ENCODE measurements at regions of chr6 and their contacts with region 1.

Region 1: DNA sequence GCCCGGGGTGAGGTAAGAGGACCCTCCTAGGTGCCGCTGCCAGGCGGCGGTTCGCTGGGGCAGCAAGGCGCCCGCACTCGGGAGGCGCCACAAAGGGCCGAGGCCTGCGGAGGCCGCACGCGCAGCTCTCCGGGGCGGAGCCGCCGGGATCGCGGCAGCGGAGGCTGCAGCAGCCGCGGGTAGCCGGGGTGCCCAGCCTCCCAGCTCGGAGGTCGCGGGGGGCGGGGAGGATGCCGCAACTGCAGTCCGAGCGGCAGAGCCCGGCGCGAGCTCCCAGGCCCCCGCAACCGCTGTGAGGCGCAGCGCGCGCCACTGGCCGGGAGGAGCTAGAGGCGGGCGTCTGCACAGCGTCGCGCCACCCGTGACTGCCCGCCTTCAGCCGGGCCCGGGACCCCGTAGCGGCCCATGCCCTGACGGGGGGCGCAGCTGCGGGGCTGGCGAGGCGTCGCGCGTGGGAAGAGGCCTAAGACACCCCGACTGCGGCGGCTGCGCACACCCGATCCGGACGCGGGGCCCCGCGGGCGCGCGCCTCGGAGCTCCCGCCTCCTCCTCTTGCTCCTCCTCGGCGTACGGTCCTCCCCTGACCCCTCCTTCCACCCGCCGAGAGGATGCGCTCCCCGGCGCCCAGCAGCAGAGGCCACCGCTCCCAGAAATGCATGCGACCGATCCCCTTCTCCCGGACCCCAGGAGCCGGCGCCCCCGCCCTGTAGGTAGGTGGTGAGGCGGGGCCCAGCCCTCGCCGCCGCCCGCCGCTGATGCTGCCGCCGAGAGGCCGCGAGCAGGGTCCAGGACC is at the start of gene NCOA7:
- DNase-seq: peak; percentile 93
- H3K4me3 ChIP-seq: peak within 1 kb of the TSS; percentile 67 to 92
- H3K27ac ChIP-seq: peak within 1 kb of the TSS; percentile 86 to 97
- H3K4me1 ChIP-seq: peaks cover 37 to 44% of the 10 kb centered on the region in 2 experiments
- H3K27me3 ChIP-seq: no peaks in the 10 kb centered on the region
- CTCF ChIP-seq: peak; percentile 10; the same call in 1 of the 2 replicates
- EP300 ChIP-seq: no peak; a peak in 1 of 4 replicates
- RAD21 ChIP-seq: no peak; the same call in 1 of the 2 replicates
- polyA plus RNA-seq, gene NCOA7: 16.3 and 19.6 TPM in 2 replicates

Region 2: DNA sequence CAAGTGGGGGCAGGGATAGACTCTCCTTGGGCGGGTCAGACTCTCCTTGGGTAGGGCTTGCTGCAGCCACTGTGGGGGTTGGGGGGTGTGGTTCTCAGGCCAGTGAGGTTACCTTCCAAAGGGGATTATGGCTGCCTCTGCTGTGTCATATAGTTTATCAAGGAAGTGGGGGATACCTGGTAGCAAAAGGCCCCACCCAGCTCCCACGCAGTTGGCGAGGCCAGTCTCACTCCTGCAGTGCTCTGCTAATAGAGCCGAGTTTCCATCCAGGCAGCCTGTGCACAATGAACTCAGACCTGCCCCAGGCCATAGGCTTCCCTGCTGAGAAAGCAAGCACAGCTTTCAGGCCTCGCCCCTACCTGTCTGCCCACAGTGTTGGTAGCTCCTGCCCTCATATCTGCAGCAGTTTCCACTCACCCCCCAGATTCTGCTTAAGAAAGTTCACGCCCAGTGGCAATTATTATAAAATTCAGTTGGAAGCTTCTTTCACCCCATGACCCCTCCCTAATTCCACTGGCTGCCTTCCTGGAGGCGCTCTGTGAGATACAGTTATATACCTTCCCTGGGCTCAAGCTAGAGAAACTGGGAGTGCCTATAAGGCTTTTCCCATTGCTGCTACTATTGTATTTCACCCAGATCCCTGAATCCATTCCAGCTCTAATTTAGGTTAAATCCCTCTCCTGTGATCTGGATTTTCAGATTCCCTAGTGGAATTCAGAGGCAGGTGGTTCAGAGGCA is 544.9 kb before region 1 on chr6:
- CTCF ChIA-PET with region 1: no interaction called
- POLR2A ChIA-PET with region 1: no interaction called
- DNase-seq: no peak
- H3K4me3 ChIP-seq: no peak overlapping the region
- H3K27ac ChIP-seq: no peak overlapping the region
- H3K4me1 ChIP-seq: no peaks in the 10 kb centered on the region
- H3K27me3 ChIP-seq: no peaks in the 10 kb centered on the region; the same call in 1 of the 2 replicates
- CTCF ChIP-seq: no peak
- EP300 ChIP-seq: no peak
- RAD21 ChIP-seq: no peak

Region 3: GRCh38 chr6:125717120-125717744 is 73.3 kb before region 1 on chr6:
- CTCF ChIA-PET with region 1: no interaction called
- POLR2A ChIA-PET with region 1: no interaction called
- DNase-seq: no peak
- H3K4me3 ChIP-seq: no peak overlapping the region
- H3K27ac ChIP-seq: no peak overlapping the region
- H3K4me1 ChIP-seq: no peaks in the 10 kb centered on the region
- H3K27me3 ChIP-seq: no peaks in the 10 kb centered on the region
- CTCF ChIP-seq: no peak
- EP300 ChIP-seq: no peak
- RAD21 ChIP-seq: no peak

Region 4: GRCh38 chr6:125779924-125780539 is 10.5 kb before region 1 on chr6:
- CTCF ChIA-PET with region 1: interaction called, 39 read pairs
- POLR2A ChIA-PET with region 1: interaction called, 61 read pairs
- DNase-seq: peak; percentile 86
- H3K4me3 ChIP-seq: peak overlapping the region; percentile 77
- H3K27ac ChIP-seq: peak overlapping the region; percentile 77 to 97
- H3K4me1 ChIP-seq: peaks cover 0 to 6% of the 10 kb centered on the region in 2 experiments; a peak in 2 of 4 replicates
- H3K27me3 ChIP-seq: no peaks in the 10 kb centered on the region; the same call in 1 of the 2 replicates
- CTCF ChIP-seq: peak; percentile 22; the same call in 1 of the 2 replicates
- EP300 ChIP-seq: no peak
- RAD21 ChIP-seq: no peak

Region 5: DNA sequence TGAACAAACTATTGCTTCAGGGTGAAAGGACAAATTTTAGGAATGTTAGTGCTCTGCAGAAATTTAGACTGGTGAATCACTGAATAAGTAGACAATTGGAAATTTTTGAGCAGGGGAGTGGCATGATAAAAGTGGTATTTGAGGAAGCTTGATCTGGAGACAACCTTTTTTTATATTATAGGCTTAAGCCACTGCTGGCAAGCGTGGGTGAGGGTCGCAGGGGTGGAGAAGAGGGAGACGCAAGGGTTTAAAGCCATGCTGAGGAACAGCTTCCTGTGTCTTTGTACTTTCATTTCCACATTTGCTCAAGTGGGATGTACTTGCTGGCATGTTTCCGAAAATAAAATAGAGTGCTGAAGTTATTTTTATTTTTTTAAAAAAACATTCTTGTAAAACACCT is 23.9 kb after region 1 on chr6:
- CTCF ChIA-PET with region 1: interaction called, 11 read pairs
- POLR2A ChIA-PET with region 1: interaction called, 4 read pairs
- DNase-seq: no peak
- H3K4me3 ChIP-seq: no peak overlapping the region
- H3K27ac ChIP-seq: peak overlapping the region in 1 of 2 experiments; percentile 16; a peak in 2 of 4 replicates
- H3K4me1 ChIP-seq: peaks cover 36 to 42% of the 10 kb centered on the region in 2 experiments; a peak in 3 of 4 replicates
- H3K27me3 ChIP-seq: no peaks in the 10 kb centered on the region
- CTCF ChIP-seq: no peak
- EP300 ChIP-seq: no peak
- RAD21 ChIP-seq: no peak

Region 6: DNA sequence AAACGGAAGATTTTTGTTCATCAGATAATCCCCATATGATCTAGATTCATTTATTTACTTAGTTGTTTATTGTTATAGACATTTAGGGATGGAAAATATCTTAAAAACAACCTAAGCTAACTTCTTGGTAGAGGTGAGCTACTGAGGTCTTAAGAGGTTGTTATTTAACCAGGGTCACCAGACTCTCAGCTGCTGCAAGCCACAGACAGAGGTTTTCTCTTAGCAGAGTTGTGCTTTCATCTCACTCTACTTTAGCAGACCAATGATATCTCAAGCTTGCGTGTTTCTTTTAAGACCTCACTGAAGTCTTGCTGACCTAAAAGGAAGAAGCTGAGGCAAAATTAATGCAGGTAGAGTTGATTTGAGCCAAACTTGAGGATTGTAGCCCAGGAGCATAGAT is 43.8 kb after region 1 on chr6:
- CTCF ChIA-PET with region 1: interaction called, 17 read pairs
- POLR2A ChIA-PET with region 1: interaction called, 11 read pairs
- DNase-seq: no peak
- H3K4me3 ChIP-seq: no peak overlapping the region
- H3K27ac ChIP-seq: peak overlapping the region; percentile 80 to 97
- H3K4me1 ChIP-seq: peaks cover 11 to 36% of the 10 kb centered on the region in 2 experiments; a peak in 3 of 4 replicates
- H3K27me3 ChIP-seq: no peaks in the 10 kb centered on the region
- CTCF ChIP-seq: no peak
- EP300 ChIP-seq: no peak
- RAD21 ChIP-seq: no peak

Region 7: DNA sequence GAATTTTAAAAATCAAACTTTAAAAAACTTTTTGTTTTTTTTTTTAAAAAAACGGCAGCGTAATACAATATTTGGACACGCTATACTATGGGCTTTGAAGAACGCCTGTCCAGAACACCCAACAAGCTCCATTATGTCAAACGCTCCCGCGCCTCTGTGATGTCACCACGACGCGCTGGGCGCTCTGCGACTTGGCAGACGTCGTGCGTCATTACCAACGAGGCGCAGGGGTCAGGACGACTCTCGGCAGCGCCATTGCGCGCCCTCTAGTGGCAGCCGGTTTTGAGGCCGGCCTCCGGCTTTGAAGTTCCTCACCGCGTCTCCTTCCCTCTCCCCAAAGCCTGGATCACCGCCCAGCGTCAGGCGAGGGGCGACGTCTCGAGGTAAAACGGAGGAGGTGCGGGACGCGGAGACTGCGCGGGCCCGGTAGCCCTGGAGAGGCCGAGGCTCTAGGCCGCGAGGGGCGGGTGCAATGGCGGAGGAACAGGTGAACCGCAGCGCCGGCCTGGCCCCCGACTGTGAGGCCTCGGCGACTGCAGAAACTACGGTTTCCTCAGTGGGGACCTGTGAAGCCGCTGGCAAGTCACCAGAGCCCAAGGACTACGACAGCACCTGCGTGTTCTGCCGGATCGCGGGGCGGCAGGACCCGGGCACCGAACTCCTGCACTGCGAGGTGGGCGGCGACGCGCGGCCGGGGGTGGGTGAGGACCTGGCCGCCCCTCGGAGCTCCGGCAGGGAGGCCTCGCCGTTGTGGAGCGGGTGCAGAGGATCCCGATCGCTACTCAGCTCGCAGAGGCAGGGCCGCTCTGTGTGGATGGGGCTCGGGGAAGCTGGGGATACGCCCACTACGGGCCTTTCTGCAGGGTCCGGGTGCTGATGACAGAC is 166.2 kb after region 1 on chr6 and contains the start of gene HINT3:
- CTCF ChIA-PET with region 1: interaction called, 65 read pairs
- POLR2A ChIA-PET with region 1: interaction called, 44 read pairs
- DNase-seq: peak; percentile 92
- H3K4me3 ChIP-seq: peak within 1 kb of the TSS; percentile 79 to 96
- H3K27ac ChIP-seq: peak within 1 kb of the TSS; percentile 68 to 90
- H3K4me1 ChIP-seq: peaks cover 7 to 8% of the 10 kb centered on the region in 2 experiments; a peak in 3 of 4 replicates
- H3K27me3 ChIP-seq: no peaks in the 10 kb centered on the region
- CTCF ChIP-seq: peak; percentile 97
- EP300 ChIP-seq: peak in 1 of 2 experiments; percentile 12; a peak in 1 of 4 replicates
- RAD21 ChIP-seq: peak; percentile 75
- polyA plus RNA-seq, gene HINT3: 1.8 and 1.9 TPM in 2 replicates

Region 8: GRCh38 chr6:125986300-125987025 is 195.9 kb after region 1 on chr6 and contains the start of gene TRMT11:
- CTCF ChIA-PET with region 1: interaction called, 5 read pairs
- POLR2A ChIA-PET with region 1: interaction called, 23 read pairs
- DNase-seq: peak; percentile 91
- H3K4me3 ChIP-seq: peak within 1 kb of the TSS; percentile 88 to 98
- H3K27ac ChIP-seq: peak within 1 kb of the TSS; percentile 53 to 87; a peak in 3 of 4 replicates
- H3K4me1 ChIP-seq: peaks cover 3 to 21% of the 10 kb centered on the region in 2 experiments
- H3K27me3 ChIP-seq: no peaks in the 10 kb centered on the region
- CTCF ChIP-seq: no peak
- EP300 ChIP-seq: 0 out of 4 replicates have a peak, but pooled peaks of 1 of the 2 experiments have one; percentile 2
- RAD21 ChIP-seq: no peak
- polyA plus RNA-seq, gene TRMT11: 15.0 and 22.8 TPM in 2 replicates

Region 9: GRCh38 chr6:126054258-126054702 is 263.7 kb after region 1 on chr6:
- CTCF ChIA-PET with region 1: no interaction called
- POLR2A ChIA-PET with region 1: no interaction called
- DNase-seq: peak; percentile 14
- H3K4me3 ChIP-seq: no peak overlapping the region
- H3K27ac ChIP-seq: no peak overlapping the region
- H3K4me1 ChIP-seq: peaks cover 0 to 11% of the 10 kb centered on the region in 2 experiments; a peak in 2 of 4 replicates
- H3K27me3 ChIP-seq: no peaks in the 10 kb centered on the region
- CTCF ChIP-seq: no peak
- EP300 ChIP-seq: peak; percentile 62 to 78; a peak in 3 of 4 replicates
- RAD21 ChIP-seq: peak; percentile 28

Measured in SK-N-SH (cell line).